ENCODE measurements at regions of chr15 and their contacts with region 1.

Region 1: DNA sequence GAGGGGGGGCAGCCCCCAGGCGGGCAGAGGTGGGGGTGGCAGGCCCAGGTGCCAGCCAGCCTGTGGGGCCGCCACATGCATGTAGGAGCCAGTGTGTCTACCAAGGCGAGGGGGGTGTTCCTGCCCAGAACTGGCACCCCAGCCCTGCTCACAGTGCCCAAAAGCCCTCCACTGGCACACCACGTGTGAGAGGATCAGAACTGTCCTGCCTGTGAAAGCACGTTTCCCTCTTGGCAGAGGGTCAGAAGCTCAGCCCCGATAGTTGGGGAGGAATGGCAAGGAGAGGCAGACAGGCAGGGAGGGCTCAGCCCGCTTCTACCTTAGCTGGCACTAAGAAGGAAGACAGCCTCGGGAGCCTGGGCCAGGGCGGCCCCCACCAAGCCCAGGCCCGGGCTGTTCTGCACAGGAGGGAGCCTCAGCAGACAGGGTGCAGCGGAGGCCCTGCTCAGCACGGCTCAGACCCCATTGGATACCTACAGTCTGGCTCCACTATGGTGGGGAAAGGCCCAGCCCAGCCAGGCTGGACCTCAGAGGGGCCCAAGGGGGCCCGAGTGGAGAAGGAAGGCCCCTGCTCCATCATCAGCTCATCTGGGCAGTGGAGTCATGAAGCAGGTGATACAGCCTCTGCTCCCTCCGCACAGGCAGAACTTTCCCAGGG is 84.8 kb upstream of the LINGO1 start:
- DNase-seq: no peak
- ATAC-seq: peak in 1 of 2 donors; percentile 22
- H3K4me3 ChIP-seq: no peak overlapping the region
- H3K27ac ChIP-seq: no peak overlapping the region
- H3K4me1 ChIP-seq: no peaks in the 10 kb centered on the region
- H3K27me3 ChIP-seq: no peaks in the 10 kb centered on the region

Region 2: GRCh38 chr15:77784395-77785292 is 67.2 kb after region 1 on chr15:
- intact Hi-C with region 1: loop called in 1 of 4 experiments (anchors 10 kb)
- DNase-seq: peak in 1 of 3 donors; percentile 49
- ATAC-seq: no peak
- H3K4me3 ChIP-seq: no peak overlapping the region
- H3K27ac ChIP-seq: no peak overlapping the region
- H3K4me1 ChIP-seq: no peaks in the 10 kb centered on the region
- H3K27me3 ChIP-seq: no peaks in the 10 kb centered on the region

Measured in right cardiac atrium (tissue), 5 donors.